ENCODE measurements at regions of chr9 and their contacts with region 1.

Region 1: GRCh38 chr9:29129763-29130162 is 1556.5 kb upstream of the C9orf72 start:
- DNase-seq: no peak
- ATAC-seq: no peak
- H3K4me3 ChIP-seq: no peak overlapping the region
- H3K27ac ChIP-seq: no peak overlapping the region
- H3K4me1 ChIP-seq: no peaks in the 10 kb centered on the region
- H3K27me3 ChIP-seq: no peaks in the 10 kb centered on the region

Region 2: DNA sequence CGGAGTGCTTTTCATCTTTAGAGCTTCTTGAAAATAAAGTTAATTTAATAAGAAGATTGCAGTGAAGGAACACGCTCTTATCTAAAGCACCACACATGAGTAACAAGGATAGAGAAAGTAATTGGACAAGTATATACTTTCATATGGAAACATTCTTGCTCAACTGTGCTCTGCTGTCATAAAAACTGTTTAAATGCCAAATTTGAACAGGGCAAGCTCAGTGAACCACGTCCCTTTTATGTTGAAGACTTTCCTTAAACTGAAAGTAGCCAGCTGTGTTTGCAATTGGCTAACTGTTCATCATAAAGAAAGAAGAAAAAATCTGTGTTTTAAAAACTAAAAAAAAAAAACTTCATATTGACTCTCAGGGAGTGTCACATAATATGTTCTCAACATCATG is 54.2 kb after region 1 on chr9:
- intact Hi-C with region 1: loop called in 1 of 2 experiments (anchors 10 kb)
- DNase-seq: no peak
- ATAC-seq: no peak
- H3K4me3 ChIP-seq: no peak overlapping the region
- H3K27ac ChIP-seq: no peak overlapping the region
- H3K4me1 ChIP-seq: no peaks in the 10 kb centered on the region
- H3K27me3 ChIP-seq: no peaks in the 10 kb centered on the region

Measured in aorta (tissue), 5 donors.